Gastrocnemius medialis (tissue), 4 donors: ENCODE measurements at regions of chr10 and their contacts with region 1.

Region 1: GRCh38 chr10:103895411-103896186 is 22.4 kb downstream of the STN1 start:
- DNase-seq: no peak
- ATAC-seq: peak; percentile 16 to 51
- H3K4me3 ChIP-seq: no peak overlapping the region
- H3K27ac ChIP-seq: peak overlapping the region; percentile 69 to 78 (median 74)
- H3K4me1 ChIP-seq: peaks cover 21 to 38% of the 10 kb centered on the region in 2 donors
- H3K27me3 ChIP-seq: no peaks in the 10 kb centered on the region
- CTCF ChIP-seq: no peak
- POLR2A ChIP-seq: no peak

Region 2: GRCh38 chr10:103966671-103967447 is 71.3 kb after region 1 on chr10 and contains the start of gene SLK:
- in situ Hi-C with region 1: no loop called
- intact Hi-C with region 1: loop called (anchors 1 kb)
- DNase-seq: peak; percentile 68 to 80
- ATAC-seq: peak; percentile 88 to 91
- H3K4me3 ChIP-seq: peak within 1 kb of the TSS; percentile 71 to 97 (median 82)
- H3K27ac ChIP-seq: peak within 1 kb of the TSS; percentile 89 to 99 (median 92)
- H3K4me1 ChIP-seq: peaks cover 32 to 34% of the 10 kb centered on the region in 2 donors
- H3K27me3 ChIP-seq: no peaks in the 10 kb centered on the region
- CTCF ChIP-seq: peak in 1 of 5 experiments; percentile 20
- POLR2A ChIP-seq: peak; percentile 98
- total RNA-seq, gene SLK: 43.3 to 53.3 (median 49.8) TPM

Region 3: GRCh38 chr10:104028146-104028545 is 132.5 kb after region 1 on chr10:
- in situ Hi-C with region 1: no loop called
- intact Hi-C with region 1: loop called (anchors 10 kb)
- DNase-seq: no peak
- ATAC-seq: peak in 1 of 2 donors; percentile 60
- H3K4me3 ChIP-seq: no peak overlapping the region
- H3K27ac ChIP-seq: no peak overlapping the region
- H3K4me1 ChIP-seq: peaks cover 0 to 11% of the 10 kb centered on the region in 2 donors
- H3K27me3 ChIP-seq: no peaks in the 10 kb centered on the region
- CTCF ChIP-seq: peak in 2 of 5 experiments; percentile 21 to 25
- POLR2A ChIP-seq: no peak